Activated T-helper 2 cell treated with anti-CD3 and anti-CD28 coated beads, Interferon-gamma antibody, Interleukin-2, Interleukin-4, amounts not matched to agents 10 μg/mL and 5 μg/mL and 100 μg/mL, durations not matched to agents 14 hours and 24 hours and 36 hours (primary cell): ENCODE measurements at regions of chr21 and their contacts with region 1.

Region 1: DNA sequence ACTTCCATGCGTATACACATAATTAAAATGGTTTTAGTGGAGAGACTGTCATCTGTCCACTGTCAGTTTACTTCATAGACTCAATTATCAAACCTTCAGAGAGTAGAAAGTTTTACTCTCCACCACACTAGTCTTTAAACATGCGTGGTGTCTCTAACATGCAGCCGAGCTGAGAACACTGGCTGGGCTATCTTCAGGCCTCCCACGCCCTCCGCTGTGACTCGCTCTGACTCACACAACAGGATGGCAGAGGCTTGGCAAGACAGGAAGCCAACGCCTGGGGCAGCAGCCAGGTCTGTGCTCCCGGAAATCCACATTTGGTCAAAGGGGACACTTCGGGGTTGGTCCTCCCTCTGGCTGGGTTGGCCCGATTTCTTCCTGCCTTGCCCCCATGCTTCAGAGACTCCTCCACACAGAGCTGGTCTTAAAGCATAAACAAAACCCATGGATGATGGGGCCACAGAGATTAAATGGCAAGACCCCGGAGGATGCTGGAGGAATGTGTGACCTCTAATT is 22.7 kb upstream of the IFNGR2 start:
- DNase-seq: peak; percentile 71
- H3K4me3 Mint-ChIP-seq: peak overlapping the region; percentile 11
- H3K27ac Mint-ChIP-seq: peak overlapping the region; percentile 86
- H3K4me1 Mint-ChIP-seq: peaks cover 53% of the 10 kb centered on the region
- H3K27me3 Mint-ChIP-seq: peaks cover 12% of the 10 kb centered on the region

Region 2: DNA sequence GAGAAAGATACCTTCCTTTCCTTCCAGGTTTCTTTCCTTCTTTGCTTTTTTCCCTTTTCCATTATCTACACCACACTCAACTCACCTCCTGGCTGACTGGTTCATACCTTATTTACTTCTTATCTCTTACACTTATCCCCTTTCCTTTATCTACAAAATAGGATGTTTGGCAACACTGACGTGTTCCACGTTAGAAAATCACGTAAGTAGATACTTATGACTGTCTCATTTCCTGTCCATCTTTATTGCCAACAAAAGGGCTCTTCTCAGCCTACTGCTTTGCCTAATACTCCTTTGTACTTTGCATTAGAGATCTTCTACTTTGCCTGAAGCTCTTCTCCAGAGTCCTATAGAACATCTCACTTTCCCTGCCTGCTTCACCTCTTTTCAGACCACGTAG is 677.8 kb before region 1 on chr21:
- intact Hi-C with region 1: no loop called
- DNase-seq: no peak
- H3K4me3 Mint-ChIP-seq: no peak overlapping the region
- H3K27ac Mint-ChIP-seq: no peak overlapping the region
- H3K4me1 Mint-ChIP-seq: peaks cover 29% of the 10 kb centered on the region
- H3K27me3 Mint-ChIP-seq: no peaks in the 10 kb centered on the region

Region 3: DNA sequence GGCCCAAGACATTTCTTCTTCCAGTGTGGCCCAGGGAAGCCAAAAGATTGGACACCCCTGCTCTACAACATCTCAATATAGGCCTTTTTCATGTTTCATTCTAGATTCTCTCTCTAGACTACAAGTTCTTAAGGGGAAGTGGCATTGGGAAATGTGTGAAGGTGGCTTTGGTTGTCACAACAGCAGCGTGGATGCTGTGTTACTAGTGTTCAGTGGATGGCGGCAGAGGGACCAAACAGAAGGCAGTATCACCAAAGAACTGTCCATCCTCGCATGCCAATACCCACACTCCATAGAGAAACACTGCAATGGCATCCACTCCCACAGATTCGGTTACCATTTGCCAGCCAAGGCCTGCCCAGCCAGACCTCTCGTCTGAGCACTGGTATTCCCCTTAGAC is 175.1 kb before region 1 on chr21:
- intact Hi-C with region 1: loop called (anchors 2 kb)
- DNase-seq: no peak
- H3K4me3 Mint-ChIP-seq: peak overlapping the region; percentile 51
- H3K27ac Mint-ChIP-seq: peak overlapping the region; percentile 81
- H3K4me1 Mint-ChIP-seq: peaks cover 35% of the 10 kb centered on the region
- H3K27me3 Mint-ChIP-seq: no peaks in the 10 kb centered on the region

Region 4: GRCh38 chr21:33238565-33239255 is 141.8 kb before region 1 on chr21:
- intact Hi-C with region 1: loop called (anchors 2 kb)
- DNase-seq: no peak
- H3K4me3 Mint-ChIP-seq: peak overlapping the region; percentile 71
- H3K27ac Mint-ChIP-seq: peak overlapping the region; percentile 92
- H3K4me1 Mint-ChIP-seq: peaks cover 71% of the 10 kb centered on the region
- H3K27me3 Mint-ChIP-seq: no peaks in the 10 kb centered on the region

Region 5: GRCh38 chr21:33360881-33361602 is 19.5 kb before region 1 on chr21:
- intact Hi-C with region 1: loop called (anchors 1 kb)
- DNase-seq: peak; percentile 73
- H3K4me3 Mint-ChIP-seq: peak overlapping the region; percentile 67
- H3K27ac Mint-ChIP-seq: peak overlapping the region; percentile 66
- H3K4me1 Mint-ChIP-seq: peaks cover 18% of the 10 kb centered on the region
- H3K27me3 Mint-ChIP-seq: no peaks in the 10 kb centered on the region

Region 6: DNA sequence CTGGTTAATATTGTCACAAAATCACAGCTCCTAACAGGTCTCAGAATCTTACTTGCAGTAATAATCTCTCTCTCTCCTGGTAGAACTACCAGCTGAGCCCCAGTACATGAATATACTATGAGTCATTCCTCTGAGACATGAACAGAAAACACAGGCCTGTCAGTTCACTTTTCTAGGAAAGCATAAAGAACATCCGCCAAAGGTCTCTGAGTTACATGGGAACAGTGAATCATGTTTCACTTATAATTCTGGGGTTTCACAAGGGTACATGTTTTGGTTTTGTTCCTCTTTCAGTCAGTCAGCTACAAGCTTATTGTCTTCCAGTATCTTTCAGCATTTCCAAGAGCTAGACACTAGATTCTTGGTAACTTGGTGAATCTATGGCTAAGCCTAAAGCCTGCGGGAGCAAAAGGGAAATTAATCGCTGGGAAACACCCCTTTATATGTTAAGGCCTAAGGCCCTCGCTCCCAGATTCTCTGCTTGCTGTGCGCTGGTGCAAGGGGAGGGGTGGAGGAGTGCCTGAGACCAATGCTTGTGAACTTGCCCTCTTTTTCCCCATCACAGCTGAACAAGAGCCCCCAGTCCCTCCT is 54.3 kb after region 1 on chr21:
- intact Hi-C with region 1: loop called (anchors 1 kb)
- DNase-seq: peak; percentile 16
- H3K4me3 Mint-ChIP-seq: peak overlapping the region; percentile 27
- H3K27ac Mint-ChIP-seq: peak overlapping the region; percentile 82
- H3K4me1 Mint-ChIP-seq: peaks cover 29% of the 10 kb centered on the region
- H3K27me3 Mint-ChIP-seq: no peaks in the 10 kb centered on the region

Region 7: DNA sequence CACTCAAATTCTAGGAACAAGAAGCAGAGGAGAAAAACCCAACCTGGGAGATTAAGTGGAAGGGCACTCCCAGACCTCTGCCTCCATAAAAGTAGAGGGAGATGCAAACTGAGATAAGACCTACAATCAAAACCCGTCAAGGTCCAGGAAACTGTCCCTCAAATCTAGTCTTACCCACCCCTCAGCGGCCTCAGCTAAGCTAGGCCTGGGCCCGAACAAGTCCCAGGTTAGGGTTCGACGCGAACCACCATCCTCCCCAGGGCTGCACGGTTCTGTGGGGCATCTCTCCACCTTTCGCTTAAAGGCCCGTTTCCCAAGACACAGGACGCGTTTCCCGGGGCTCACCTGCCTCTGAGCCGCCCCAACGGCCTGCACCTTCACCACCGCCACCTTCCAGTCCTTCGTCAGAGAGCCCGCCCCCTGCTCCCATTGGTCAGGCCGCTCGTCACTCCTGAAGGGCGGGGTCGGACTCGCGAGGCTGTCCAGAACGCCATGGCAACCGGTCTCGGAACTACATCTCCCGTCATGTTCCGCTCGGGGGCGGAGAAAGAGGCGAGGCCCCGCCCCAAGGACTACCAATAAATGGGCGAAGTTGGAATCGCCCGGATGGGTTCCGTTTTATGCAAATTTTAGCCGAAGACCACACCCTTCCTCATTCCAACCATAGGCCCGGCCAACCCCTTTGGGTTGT is 260.9 kb after region 1 on chr21 and contains the start of gene CRYZL1:
- intact Hi-C with region 1: loop called (anchors 10 kb)
- DNase-seq: peak; percentile 100
- H3K4me3 Mint-ChIP-seq: peak within 1 kb of the TSS; percentile 94
- H3K27ac Mint-ChIP-seq: peak within 1 kb of the TSS; percentile 95
- H3K4me1 Mint-ChIP-seq: peaks cover 13% of the 10 kb centered on the region
- H3K27me3 Mint-ChIP-seq: peaks cover 22% of the 10 kb centered on the region
- total RNA-seq, gene CRYZL1: 30.4 and 36.5 TPM in 2 replicates